Right ventricle myocardium superior (tissue), 1 donor: ENCODE measurements at regions of chr1 and their contacts with region 1.

Region 1: GRCh38 chr1:21961834-21962233 is 15.0 kb upstream of the CELA3B start:
- DNase-seq: no peak
- ATAC-seq: no peak

Region 2: DNA sequence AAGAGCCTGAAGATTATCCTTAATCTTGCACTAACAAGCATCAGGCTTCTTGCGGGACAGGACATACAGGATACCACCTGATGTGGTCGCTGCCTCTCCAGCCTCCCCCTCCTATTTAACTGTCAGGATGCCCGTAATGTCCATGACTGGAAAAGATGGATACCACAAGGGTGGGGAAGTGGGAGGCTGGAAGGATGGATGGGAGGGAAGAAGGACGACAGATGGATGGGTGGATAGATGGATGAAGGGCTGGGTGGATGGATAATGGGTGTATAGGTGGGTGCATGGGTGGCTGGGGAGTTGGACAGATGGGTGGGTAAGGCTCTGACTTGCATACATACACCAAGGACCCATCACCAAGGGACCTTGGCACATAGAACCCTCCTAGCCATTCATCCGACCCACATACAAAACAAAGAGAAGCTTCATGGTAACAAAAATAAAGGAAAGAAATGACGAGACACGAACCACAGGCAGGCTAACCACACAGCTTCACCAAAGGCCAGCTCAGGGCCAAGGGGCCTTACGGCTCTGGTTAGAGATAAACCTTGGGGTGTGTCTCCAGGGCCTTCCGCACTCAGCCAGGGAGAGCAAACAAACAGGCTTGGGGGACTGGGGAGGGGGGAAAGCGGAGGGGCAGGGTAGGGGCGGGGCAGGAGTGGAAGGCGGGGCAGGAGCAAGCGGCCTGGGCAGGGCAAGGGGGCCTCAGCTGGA is 75.2 kb before region 1 on chr1:
- intact Hi-C with region 1: loop called (anchors 1 kb)
- DNase-seq: no peak
- ATAC-seq: no peak